Activated CD4-positive, alpha-beta T cell treated with anti-CD3 and anti-CD28 coated beads for 36 hours (primary cell): ENCODE measurements at regions of chr16 and their contacts with region 1.

Region 1: GRCh38 chr16:67428146-67428731 is 2.7 kb upstream of the HSD11B2 start:
- DNase-seq: peak; percentile 81
- ATAC-seq: peak; percentile 78
- H3K4me3 Mint-ChIP-seq: no peak overlapping the region
- H3K27ac Mint-ChIP-seq: no peak overlapping the region
- H3K4me1 Mint-ChIP-seq: peaks cover 12% of the 10 kb centered on the region
- H3K27me3 Mint-ChIP-seq: peaks cover 39% of the 10 kb centered on the region

Region 2: GRCh38 chr16:67447508-67448076 is 19.4 kb after region 1 on chr16:
- CTCF ChIA-PET with region 1: interaction called, 25 read pairs
- POLR2A ChIA-PET with region 1: no interaction called
- intact Hi-C with region 1: loop called (anchors 1 kb)
- DNase-seq: peak; percentile 89
- ATAC-seq: peak; percentile 99
- H3K4me3 Mint-ChIP-seq: no peak overlapping the region
- H3K27ac Mint-ChIP-seq: no peak overlapping the region
- H3K4me1 Mint-ChIP-seq: no peaks in the 10 kb centered on the region
- H3K27me3 Mint-ChIP-seq: no peaks in the 10 kb centered on the region

Region 3: GRCh38 chr16:67464565-67464964 is 36.3 kb after region 1 on chr16:
- CTCF ChIA-PET with region 1: interaction called, 34 read pairs
- POLR2A ChIA-PET with region 1: no interaction called
- intact Hi-C with region 1: loop called (anchors 1 to 2 kb)
- DNase-seq: no peak
- ATAC-seq: no peak
- H3K4me3 Mint-ChIP-seq: no peak overlapping the region
- H3K27ac Mint-ChIP-seq: no peak overlapping the region
- H3K4me1 Mint-ChIP-seq: peaks cover 4% of the 10 kb centered on the region
- H3K27me3 Mint-ChIP-seq: no peaks in the 10 kb centered on the region

Region 4: DNA sequence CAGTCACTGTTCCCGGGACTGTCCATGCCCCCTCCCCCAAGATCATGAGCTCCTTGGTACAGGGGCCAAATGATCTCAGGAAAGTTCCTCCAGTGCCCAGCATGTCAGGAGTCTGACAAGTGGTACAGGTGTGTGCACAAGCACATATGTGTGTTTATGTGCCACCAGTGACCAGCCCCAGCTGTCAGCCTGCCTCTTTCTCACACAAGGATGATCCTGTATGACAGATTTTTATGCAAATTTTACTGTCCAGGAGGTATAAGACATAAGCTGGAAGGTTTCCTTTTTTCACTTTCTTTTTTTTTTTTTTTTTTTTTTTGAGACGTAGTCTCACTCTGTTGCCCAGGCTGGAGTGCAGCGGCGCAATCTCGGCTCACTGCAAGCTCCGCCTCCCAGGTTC is 322.2 kb after region 1 on chr16:
- CTCF ChIA-PET with region 1: no interaction called
- POLR2A ChIA-PET with region 1: no interaction called
- intact Hi-C with region 1: no loop called
- DNase-seq: no peak
- ATAC-seq: no peak
- H3K4me3 Mint-ChIP-seq: no peak overlapping the region
- H3K27ac Mint-ChIP-seq: no peak overlapping the region
- H3K4me1 Mint-ChIP-seq: no peaks in the 10 kb centered on the region
- H3K27me3 Mint-ChIP-seq: no peaks in the 10 kb centered on the region

Region 5: DNA sequence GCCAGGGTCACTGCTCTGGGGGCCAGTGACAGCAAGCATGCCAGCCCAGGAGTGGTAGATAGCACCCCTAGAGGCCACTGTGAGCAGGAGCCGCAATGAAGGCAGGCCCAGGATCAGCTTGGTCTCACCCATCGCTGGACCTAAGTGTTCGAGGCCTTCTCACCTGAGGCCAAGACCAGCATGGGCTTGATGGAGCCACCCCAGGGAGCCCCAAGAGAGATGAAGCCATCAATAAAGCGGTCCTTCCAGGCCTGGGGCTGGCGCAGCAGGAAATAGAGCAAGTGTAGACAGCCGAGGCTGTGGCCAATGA is 513.9 kb after region 1 on chr16:
- CTCF ChIA-PET with region 1: no interaction called
- POLR2A ChIA-PET with region 1: no interaction called
- intact Hi-C with region 1: no loop called
- DNase-seq: peak; percentile 56
- ATAC-seq: peak; percentile 64
- H3K4me3 Mint-ChIP-seq: no peak overlapping the region
- H3K27ac Mint-ChIP-seq: no peak overlapping the region
- H3K4me1 Mint-ChIP-seq: peaks cover 24% of the 10 kb centered on the region
- H3K27me3 Mint-ChIP-seq: no peaks in the 10 kb centered on the region